ENCODE measurements at regions of chr10 and their contacts with region 1.

Region 1: GRCh38 chr10:58177362-58177947 is 90.2 kb downstream of the IPMK start:
- DNase-seq: no peak
- H3K4me3 ChIP-seq: no peak overlapping the region
- H3K4me3 Mint-ChIP-seq: no peak overlapping the region
- H3K27ac Mint-ChIP-seq: no peak overlapping the region
- H3K4me1 ChIP-seq: no peaks in the 10 kb centered on the region
- H3K4me1 Mint-ChIP-seq: peaks cover 6% of the 10 kb centered on the region
- H3K27me3 ChIP-seq: no peaks in the 10 kb centered on the region; the same call in 1 of the 2 replicates
- H3K27me3 Mint-ChIP-seq: peaks cover 5% of the 10 kb centered on the region
- CTCF ChIP-seq: peak; percentile 75

Region 2: GRCh38 chr10:58291538-58292174 is 114.2 kb after region 1 on chr10:
- CTCF ChIA-PET with region 1: interaction called, 84 read pairs
- POLR2A ChIA-PET with region 1: no interaction called
- intact Hi-C with region 1: loop called (anchors 1 kb)
- DNase-seq: peak; percentile 58 to 79
- H3K4me3 ChIP-seq: no peak overlapping the region
- H3K4me3 Mint-ChIP-seq: no peak overlapping the region
- H3K27ac Mint-ChIP-seq: no peak overlapping the region
- H3K4me1 ChIP-seq: no peaks in the 10 kb centered on the region
- H3K4me1 Mint-ChIP-seq: peaks cover 6% of the 10 kb centered on the region
- H3K27me3 ChIP-seq: no peaks in the 10 kb centered on the region
- H3K27me3 Mint-ChIP-seq: no peaks in the 10 kb centered on the region
- CTCF ChIP-seq: peak; percentile 94 to 96